OCI-LY7 (cell line): ENCODE measurements at regions of chr3 and their contacts with region 1.

Region 1: DNA sequence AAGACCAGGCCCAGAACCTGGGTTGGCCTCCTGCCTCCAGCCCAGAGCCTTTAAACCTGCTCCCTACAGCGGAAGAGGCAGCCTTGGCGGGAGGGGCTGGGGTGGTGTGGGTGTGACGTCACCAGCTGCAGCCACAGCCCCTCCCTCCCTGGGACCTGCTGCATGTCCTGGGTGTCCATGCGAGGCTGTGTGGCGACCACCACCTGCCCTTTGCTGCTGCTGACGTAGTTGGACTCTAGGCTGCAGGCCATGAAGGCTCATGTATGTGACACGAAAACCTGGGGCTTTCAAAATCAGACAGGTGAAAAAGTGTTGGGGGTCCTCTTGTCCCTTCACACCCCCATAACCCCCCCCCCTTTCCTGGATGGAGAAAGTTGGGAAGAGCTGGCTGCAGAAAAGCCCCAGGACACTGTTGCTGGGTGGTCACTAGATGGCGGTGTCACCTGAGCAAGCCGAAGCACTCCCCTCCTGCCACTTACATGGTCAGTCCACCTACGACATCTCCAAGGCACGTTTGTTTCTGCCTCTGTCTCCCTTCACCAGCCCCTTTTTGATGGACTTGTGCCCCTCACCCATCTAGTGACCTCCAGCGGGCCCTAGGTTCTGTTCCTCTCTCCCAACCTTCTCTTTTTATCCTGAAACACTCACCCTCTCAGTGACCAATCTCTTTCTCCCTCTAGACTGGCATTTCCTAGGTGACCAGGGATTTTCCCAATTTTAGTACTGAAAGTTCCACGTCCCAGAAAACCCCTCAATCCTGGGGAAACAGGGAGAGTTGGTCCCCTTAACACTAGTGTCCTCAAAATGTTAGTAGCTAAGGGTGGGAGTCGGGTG is 35.2 kb downstream of the SLC6A20 start:
- DNase-seq: peak; percentile 53
- H3K4me3 ChIP-seq: no peak overlapping the region
- H3K27ac ChIP-seq: no peak overlapping the region
- H3K4me1 ChIP-seq: no peaks in the 10 kb centered on the region
- CTCF ChIP-seq: peak; percentile 85

Region 2: DNA sequence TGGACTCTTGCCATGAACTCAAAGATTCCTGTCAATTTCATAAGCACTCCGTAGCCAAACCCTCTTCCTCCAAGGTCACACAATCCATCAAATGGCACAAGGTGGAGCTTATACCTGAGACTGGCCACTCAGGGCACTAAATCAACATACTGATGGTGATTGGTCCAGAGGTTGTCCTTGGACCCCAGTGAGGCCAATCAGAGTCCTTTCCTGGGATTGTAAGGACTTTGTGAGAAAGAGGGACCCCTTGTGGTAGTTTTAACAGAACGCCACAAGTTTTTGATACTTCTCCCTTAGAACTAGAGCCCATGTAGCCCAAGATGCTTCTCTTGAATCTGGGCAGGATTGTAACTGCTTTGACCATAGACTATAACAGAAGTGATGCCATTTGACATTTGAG is 417.1 kb before region 1 on chr3:
- CTCF ChIA-PET with region 1: no interaction called
- POLR2A ChIA-PET with region 1: no interaction called
- intact Hi-C with region 1: no loop called
- DNase-seq: peak; percentile 18
- H3K4me3 ChIP-seq: no peak overlapping the region
- H3K27ac ChIP-seq: no peak overlapping the region
- H3K4me1 ChIP-seq: no peaks in the 10 kb centered on the region
- CTCF ChIP-seq: peak; percentile 53; the same call in 1 of the 2 replicates

Region 3: DNA sequence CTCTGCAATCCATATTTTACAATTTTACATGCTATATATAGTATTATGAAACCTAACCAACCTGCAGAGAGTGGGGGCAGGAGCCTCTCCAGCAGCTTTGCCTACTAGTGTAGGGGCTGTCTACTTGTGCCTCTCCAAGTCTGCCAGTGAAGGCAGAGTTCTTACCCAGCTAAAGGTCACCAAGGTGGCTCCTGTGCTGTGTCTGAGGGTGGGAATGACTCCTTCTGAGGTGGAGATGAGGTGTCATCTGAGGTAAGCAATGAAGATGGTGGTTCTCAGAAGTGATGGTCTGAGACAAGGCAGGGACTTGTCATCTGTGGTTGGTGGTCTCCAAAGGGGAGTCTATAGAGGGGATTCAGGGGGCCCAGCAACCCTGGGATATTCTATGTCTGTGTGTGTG is 24.4 kb before region 1 on chr3:
- CTCF ChIA-PET with region 1: no interaction called
- POLR2A ChIA-PET with region 1: no interaction called
- intact Hi-C with region 1: no loop called
- DNase-seq: no peak
- H3K4me3 ChIP-seq: no peak overlapping the region
- H3K27ac ChIP-seq: no peak overlapping the region
- H3K4me1 ChIP-seq: peaks cover 8% of the 10 kb centered on the region
- CTCF ChIP-seq: no peak

Region 4: GRCh38 chr3:45793482-45794176 is 32.5 kb after region 1 on chr3:
- CTCF ChIA-PET with region 1: no interaction called
- POLR2A ChIA-PET with region 1: no interaction called
- intact Hi-C with region 1: no loop called
- DNase-seq: no peak
- H3K4me3 ChIP-seq: no peak overlapping the region
- H3K27ac ChIP-seq: no peak overlapping the region
- H3K4me1 ChIP-seq: no peaks in the 10 kb centered on the region
- CTCF ChIP-seq: 0 out of 2 replicates have a peak, but pooled peaks have one; percentile 10

Region 5: GRCh38 chr3:45832691-45833090 is 71.6 kb after region 1 on chr3:
- CTCF ChIA-PET with region 1: no interaction called
- POLR2A ChIA-PET with region 1: no interaction called
- intact Hi-C with region 1: loop called (anchors 10 kb)
- DNase-seq: peak; percentile 20
- H3K4me3 ChIP-seq: no peak overlapping the region
- H3K27ac ChIP-seq: no peak overlapping the region
- H3K4me1 ChIP-seq: no peaks in the 10 kb centered on the region
- CTCF ChIP-seq: peak; percentile 54

Region 6: DNA sequence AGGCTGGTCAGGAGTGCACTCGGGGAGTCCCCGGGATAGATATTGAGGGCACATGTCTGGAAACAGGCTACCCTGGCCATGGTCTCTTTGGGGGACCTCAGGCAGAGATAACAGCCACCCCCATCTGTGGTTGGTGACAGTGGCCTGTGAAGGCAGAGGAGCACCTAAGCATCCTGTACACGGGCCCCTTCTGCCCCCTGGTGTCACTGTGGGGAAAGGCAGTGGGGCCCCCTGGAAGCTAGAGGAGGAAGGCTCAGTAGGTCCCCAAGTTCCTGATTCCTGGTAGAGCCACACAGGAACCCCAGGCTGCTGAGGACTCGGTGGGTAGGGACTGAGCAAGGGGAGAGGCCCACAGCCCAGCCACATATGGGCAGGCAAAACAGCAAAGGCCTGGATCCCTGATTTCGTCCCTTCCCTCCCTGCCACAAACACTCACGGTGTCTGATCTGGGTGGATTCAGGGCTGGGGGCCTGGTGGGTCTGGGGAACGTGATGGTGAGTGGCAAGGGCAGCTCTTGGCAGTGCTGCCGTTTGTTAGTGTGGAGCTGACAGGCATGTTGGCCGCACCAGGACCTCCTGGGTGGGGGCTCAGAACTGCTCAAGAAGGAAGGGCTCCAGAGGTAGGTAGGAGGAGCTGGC is 168.1 kb after region 1 on chr3:
- CTCF ChIA-PET with region 1: no interaction called
- POLR2A ChIA-PET with region 1: no interaction called
- intact Hi-C with region 1: loop called (anchors 1 kb)
- DNase-seq: peak; percentile 48
- H3K4me3 ChIP-seq: no peak overlapping the region
- H3K27ac ChIP-seq: no peak overlapping the region
- H3K4me1 ChIP-seq: no peaks in the 10 kb centered on the region
- CTCF ChIP-seq: peak; percentile 79